Motor neuron (in vitro differentiated cells): ENCODE measurements at regions of chr17 and their contacts with region 1.

Region 1: GRCh38 chr17:4881761-4882555 is 17.4 kb upstream of the C17orf107 start:
- ATAC-seq: peak; percentile 62 to 99 (median 80)
- H3K4me3 ChIP-seq: no peak overlapping the region
- H3K27ac ChIP-seq: no peak overlapping the region
- H3K4me1 ChIP-seq: no peaks in the 10 kb centered on the region

Region 2: DNA sequence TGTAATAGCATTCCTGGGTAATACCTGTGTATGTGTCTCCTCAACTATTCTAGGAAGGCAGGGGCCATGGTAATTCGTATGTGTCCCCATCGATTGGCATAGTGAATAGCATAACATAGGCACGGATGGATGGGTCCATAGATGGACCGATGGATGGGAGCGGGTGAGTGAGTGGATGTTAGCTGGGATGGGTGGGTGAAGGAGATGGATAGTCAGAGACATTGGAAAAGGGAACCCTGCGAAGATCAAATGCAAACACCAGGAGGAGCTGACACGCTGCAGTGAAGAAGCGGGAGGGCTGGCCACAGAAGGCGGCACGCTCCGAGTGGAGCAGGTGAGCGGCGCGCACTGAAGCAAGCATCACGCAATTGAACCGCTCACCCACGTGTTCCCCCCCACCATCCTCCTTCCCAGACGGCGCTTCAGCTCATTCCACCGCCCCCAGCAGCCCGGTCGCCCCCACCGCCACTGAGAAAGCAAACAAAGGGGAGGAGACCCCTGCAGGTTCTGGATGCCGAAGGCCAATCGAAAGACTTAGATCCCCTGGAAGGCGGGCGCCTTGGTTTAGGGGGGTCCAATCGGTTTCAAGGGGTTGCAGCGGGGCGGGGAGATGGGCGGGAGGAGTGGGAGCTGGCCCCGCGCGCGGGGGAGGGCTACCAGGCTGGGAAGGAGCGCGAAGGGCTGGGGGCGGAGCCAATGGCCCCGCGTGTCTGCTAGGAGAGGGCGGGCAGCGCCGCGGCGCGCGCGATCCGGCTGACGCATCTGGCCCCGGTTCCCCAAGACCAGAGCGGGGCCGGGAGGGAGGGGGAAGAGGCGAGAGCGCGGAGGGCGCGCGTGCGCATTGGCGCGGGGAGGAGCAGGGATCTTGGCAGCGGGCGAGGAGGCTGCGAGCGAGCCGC is 171.9 kb before region 1 on chr17 and contains the start of gene ARRB2:
- in situ Hi-C with region 1: loop called in 1 of 9 experiments (anchors 25 kb)
- ATAC-seq: peak; percentile 82 to 87 (median 85)
- H3K4me3 ChIP-seq: peak within 1 kb of the TSS; percentile 53 to 81 (median 74)
- H3K27ac ChIP-seq: peak within 1 kb of the TSS; percentile 73 to 87
- H3K4me1 ChIP-seq: peaks cover 6 to 8% of the 10 kb centered on the region in 2 donors
- total RNA-seq, gene ARRB2: 7.0 to 37.9 (median 27.5) TPM

Region 3: DNA sequence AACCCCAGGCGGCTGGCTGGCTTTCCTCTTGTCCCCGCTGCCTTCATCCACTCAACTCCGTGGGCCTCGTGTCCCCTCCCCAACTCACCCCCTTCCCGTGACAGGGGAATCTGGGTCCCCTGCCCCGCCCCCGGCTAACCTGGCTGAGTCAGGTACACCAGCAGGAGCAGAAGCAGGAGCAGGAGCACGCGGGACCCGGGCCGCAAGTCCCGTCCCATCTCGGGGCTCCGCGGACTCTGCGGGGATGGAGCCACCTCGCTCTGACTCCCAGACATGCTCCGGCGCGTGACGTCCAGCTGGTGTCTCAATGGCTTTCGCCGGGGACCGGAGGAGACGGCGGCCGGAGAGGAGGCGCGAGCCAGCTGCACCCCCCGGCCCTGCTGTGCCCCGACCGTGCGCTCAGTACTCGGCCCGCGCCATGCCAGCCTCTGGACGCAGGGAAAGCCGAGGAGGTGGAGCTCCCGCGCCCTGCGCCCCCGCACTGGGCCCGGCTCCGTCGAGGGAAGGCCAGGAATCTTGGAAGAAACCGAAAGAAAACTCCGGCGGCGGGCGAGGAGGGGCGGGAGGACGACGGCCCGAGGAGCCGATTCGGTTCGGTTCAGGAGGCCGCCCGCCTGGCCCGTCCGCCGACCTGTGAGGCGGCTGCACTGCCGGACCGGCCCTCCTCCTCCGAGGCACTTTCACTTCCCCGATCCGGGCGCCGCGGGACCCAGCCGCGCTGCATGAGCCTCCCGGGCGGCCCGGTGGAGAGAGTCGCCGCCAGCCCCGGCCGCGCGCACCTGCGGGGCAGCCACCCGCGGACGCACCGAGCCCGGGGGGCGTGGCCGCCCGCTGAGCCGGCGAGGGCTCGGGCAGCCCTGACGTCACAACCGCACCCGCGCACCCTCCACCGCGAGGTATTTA is 142.6 kb before region 1 on chr17 and contains the starts of genes CXCL16 and ZMYND15:
- in situ Hi-C with region 1: loop called in 1 of 9 experiments (anchors 25 kb)
- ATAC-seq: peak; percentile 69 to 91 (median 75)
- H3K4me3 ChIP-seq: peak within 1 kb of the TSS; percentile 19 to 43 (median 39)
- H3K27ac ChIP-seq: no peak within 1 kb of the TSS
- H3K4me1 ChIP-seq: peaks cover 2 to 6% of the 10 kb centered on the region in 2 donors
- total RNA-seq, gene CXCL16: 0.46 to 10.8 (median 3.8) TPM
- total RNA-seq, gene ZMYND15: 0.14 to 1.1 (median 0.51) TPM in 7 of 8 experiments, not detected in the other

Region 4: DNA sequence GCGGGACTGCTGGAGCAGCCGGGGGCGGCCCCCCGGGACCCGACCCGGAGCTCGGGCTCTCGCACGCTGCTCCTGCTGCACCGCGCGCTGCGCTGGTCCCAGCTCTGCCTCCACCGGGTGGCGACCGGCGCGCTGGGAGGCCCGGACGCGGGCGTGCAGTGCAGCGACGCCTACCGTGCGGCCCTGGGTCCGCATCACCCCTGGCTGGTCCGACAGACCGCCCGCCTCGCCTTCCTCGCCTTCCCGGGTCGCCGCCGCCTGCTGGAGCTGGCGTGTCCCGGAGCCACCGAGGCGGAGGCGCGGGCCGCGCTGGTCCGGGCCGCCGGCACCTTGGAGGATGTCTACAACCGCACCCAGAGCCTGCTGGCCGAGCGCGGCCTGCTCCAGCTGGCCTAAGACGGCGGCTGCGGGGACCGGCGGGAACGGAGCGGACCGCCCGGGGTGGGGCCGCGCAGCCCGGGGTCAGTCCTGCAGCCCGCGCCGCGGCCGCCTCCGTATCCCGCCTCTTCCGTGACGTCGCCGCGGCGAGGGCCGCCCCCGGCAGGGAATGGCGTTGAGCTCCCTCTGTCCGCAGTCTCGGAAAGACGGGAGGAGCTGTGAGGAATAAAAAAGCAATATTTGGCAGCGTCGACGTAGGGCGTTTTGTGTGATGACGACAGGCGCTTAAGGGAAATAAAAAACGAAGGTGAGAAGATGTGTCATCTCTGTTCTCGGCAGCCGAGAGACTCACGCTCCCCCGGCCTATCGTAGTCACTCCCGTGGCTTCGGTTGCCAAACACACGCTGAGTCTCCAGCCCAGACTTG is 91.9 kb before region 1 on chr17:
- in situ Hi-C with region 1: loop called in 1 of 9 experiments (anchors 25 kb)
- ATAC-seq: peak; percentile 84 to 91 (median 90)
- H3K4me3 ChIP-seq: peak overlapping the region; percentile 55 to 76 (median 64)
- H3K27ac ChIP-seq: peak overlapping the region; percentile 93 to 97
- H3K4me1 ChIP-seq: peaks cover 7 to 12% of the 10 kb centered on the region in 2 donors